SK-N-SH (cell line): ENCODE measurements at regions of chr14 and their contacts with region 1.

Region 1: DNA sequence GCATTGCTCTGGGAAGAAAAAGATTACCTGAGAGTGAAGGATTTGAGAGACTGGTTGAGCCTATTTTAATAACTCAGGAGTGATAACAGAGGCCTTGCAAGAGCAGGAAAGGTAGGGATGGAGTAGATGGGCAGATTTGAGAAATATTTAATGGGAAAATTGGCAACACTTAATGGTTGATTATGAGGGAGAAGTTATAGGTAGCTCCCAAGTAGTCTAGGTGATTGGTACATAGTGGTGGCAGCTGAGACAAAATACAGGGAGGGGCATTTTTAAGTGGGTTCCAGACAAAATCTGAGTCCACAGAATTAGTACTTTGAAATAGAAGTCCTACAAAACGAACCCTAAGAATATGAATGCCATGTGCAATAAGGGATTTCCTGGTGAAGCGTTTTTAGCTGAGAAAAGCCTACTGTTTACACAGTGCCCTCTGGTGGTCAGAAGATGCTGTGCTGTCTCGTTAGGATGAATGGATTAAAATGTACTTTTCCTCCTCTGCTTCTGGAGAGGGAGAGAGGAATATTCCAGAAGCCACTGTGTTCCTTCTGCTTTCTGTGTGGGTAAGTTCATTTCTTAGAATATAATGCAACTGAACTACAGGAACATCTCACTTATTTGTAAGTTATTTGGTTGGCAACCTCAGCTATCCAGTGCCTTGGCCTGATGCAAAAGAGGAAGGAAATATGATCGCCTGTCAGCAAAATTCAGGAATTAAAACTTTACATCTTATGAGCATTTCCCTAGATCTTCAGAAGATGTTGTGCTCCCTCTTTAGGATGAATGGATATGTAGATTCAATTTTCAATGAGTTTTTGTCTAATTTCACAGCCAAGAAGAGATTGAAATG is 6.5 kb downstream of the ZBTB1 start:
- DNase-seq: peak; percentile 58
- H3K4me3 ChIP-seq: no peak overlapping the region; a peak in 1 of 4 replicates
- H3K27ac ChIP-seq: peak overlapping the region; percentile 10 to 53; a peak in 3 of 4 replicates
- H3K4me1 ChIP-seq: peaks cover 9 to 25% of the 10 kb centered on the region in 2 experiments; a peak in 3 of 4 replicates
- H3K27me3 ChIP-seq: no peaks in the 10 kb centered on the region
- CTCF ChIP-seq: peak; percentile 94
- EP300 ChIP-seq: no peak
- RAD21 ChIP-seq: peak; percentile 72

Region 2: DNA sequence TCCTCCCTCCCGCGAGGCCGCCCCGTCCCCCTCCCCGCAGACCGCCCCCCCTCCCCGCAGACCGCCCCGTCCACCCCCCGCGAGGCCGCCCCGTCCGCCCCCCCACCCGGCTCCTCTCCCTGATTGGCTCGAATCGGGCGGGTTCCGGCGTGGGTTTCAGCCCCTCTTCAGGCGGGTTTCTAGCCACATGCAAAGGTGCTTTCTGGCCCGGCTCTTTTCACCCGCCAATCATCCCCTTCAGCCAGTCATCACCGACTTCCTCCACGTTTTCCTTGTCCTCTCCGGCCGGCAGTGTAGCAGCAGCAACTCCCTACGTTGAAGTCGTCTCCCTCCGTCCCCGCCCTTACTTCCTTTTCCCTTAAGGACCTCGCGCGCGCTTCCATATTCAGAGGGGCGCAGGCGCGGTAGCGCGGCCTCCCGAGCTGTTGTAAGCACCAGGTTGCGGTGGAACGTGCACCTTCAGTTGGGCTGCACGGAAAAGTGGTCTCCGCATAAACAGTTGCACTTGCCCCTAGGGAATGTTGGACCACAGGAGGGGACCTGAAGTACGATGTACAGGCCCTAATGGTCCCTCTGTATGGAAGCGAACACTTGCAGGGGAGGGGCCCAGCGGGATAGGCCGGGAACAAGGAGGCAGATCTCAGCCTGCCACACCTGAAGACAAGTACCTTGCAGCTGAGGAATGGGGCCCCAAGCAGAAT is 172.3 kb before region 1 on chr14:
- CTCF ChIA-PET with region 1: interaction called, 16 read pairs
- POLR2A ChIA-PET with region 1: no interaction called
- DNase-seq: peak; percentile 96
- H3K4me3 ChIP-seq: peak overlapping the region; percentile 85 to 90
- H3K27ac ChIP-seq: peak overlapping the region; percentile 45 to 97; a peak in 3 of 4 replicates
- H3K4me1 ChIP-seq: peaks cover 0 to 7% of the 10 kb centered on the region in 2 experiments; a peak in 2 of 4 replicates
- H3K27me3 ChIP-seq: no peaks in the 10 kb centered on the region
- CTCF ChIP-seq: no peak
- EP300 ChIP-seq: no peak
- RAD21 ChIP-seq: no peak

Region 3: GRCh38 chr14:64465191-64465822 is 45.7 kb before region 1 on chr14 and contains the start of gene AKAP5:
- CTCF ChIA-PET with region 1: interaction called, 12 read pairs
- POLR2A ChIA-PET with region 1: no interaction called
- DNase-seq: peak; percentile 96
- H3K4me3 ChIP-seq: peak within 1 kb of the TSS; percentile 68 to 73
- H3K27ac ChIP-seq: peak within 1 kb of the TSS; percentile 24 to 64; a peak in 2 of 4 replicates
- H3K4me1 ChIP-seq: peaks cover 0 to 13% of the 10 kb centered on the region in 2 experiments; a peak in 2 of 4 replicates
- H3K27me3 ChIP-seq: no peaks in the 10 kb centered on the region
- CTCF ChIP-seq: no peak
- EP300 ChIP-seq: no peak
- RAD21 ChIP-seq: no peak
- polyA plus RNA-seq, gene AKAP5: 0.28 and 0.36 TPM in 2 replicates

Region 4: GRCh38 chr14:64496764-64497163 is 14.3 kb before region 1 on chr14:
- CTCF ChIA-PET with region 1: interaction called, 13 read pairs
- POLR2A ChIA-PET with region 1: no interaction called
- DNase-seq: no peak
- H3K4me3 ChIP-seq: no peak overlapping the region
- H3K27ac ChIP-seq: no peak overlapping the region
- H3K4me1 ChIP-seq: peaks cover 12 to 13% of the 10 kb centered on the region in 2 experiments; a peak in 3 of 4 replicates
- H3K27me3 ChIP-seq: no peaks in the 10 kb centered on the region
- CTCF ChIP-seq: no peak
- EP300 ChIP-seq: no peak
- RAD21 ChIP-seq: no peak